ENCODE measurements at regions of chr3 and their contacts with region 1.

Region 1: GRCh38 chr3:109731620-109732473 is 394.5 kb upstream of the DPPA4 start:
- DNase-seq: no peak
- H3K4me3 ChIP-seq: no peak overlapping the region
- H3K27ac ChIP-seq: no peak overlapping the region
- H3K4me1 ChIP-seq: no peaks in the 10 kb centered on the region
- H3K27me3 ChIP-seq: no peaks in the 10 kb centered on the region
- CTCF ChIP-seq: peak; percentile 49 to 82 (median 79)
- POLR2A ChIP-seq: no peak

Region 2: GRCh38 chr3:109607897-109608296 is 124.0 kb before region 1 on chr3:
- intact Hi-C with region 1: no loop called
- DNase-seq: no peak
- H3K4me3 ChIP-seq: no peak overlapping the region
- H3K27ac ChIP-seq: no peak overlapping the region
- H3K4me1 ChIP-seq: no peaks in the 10 kb centered on the region
- H3K27me3 ChIP-seq: no peaks in the 10 kb centered on the region
- CTCF ChIP-seq: no peak
- POLR2A ChIP-seq: no peak

Region 3: DNA sequence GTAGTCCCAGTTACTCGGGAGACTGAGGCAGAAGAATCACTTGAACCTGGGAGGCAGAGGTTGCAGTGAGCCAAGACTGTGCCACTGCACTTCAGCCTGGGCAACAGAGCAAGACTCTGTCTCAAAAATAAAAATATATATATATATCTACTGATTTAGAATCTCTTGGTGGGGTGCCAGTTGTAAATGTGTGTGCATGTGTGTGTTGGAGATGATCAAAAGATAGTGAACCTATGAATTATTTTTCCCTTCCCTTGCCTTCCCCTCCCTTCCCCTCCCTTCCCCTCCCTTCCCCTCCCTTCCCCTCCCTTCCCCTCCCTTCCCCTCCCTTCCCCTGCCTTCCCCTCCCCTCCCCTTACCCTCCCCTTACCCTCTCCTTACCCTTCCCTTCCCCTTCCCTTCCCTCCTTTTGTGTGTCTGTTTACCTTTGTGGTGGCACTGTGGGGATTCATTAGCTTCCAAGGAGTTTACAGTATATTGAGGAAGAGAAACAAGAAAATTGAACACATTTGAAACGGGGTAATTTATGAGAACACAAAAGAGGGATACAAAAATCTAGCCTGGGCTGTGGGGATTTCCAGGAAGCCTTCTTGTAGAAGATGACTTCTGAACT is 113.0 kb before region 1 on chr3:
- intact Hi-C with region 1: no loop called
- DNase-seq: no peak
- H3K4me3 ChIP-seq: no peak overlapping the region
- H3K27ac ChIP-seq: no peak overlapping the region
- H3K4me1 ChIP-seq: no peaks in the 10 kb centered on the region
- H3K27me3 ChIP-seq: no peaks in the 10 kb centered on the region
- CTCF ChIP-seq: no peak
- POLR2A ChIP-seq: no peak

Region 4: DNA sequence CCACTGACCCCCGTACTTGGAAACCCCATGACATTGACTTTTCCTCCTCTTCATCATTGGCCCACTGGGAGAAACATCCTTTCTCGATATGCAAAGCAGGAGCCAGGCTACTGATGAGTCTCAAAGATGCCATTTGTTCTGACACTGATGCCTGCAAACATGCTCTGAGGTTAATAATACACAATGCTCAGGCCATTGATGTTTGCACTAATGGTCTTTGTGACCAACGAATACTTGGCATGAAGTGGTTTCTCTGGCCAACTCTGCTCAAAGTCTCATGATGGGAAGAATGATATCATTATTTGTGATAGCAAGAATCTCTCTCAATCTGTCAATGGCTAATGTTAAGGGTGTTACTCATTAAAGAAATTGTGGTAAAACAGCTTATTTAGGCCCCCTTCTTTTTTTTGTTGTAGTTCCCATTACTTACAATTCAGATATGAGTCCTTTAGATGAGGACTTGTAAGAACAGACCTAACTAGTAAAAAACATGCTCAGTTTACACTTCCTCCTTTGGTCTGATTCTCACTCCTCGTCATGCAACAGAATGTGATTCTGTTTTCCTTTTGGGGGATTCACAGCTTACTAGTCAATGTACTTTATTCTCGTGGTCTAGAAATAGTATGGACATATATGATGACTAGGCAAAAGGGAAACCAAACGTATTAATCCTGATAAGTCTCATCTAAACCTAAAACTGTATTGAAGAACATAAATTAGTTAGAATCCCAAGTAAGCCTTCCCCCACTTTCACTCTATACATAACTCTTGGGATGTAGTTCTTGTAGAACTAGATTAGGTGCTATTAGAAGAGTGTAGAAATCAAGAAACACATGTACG is 94.3 kb after region 1 on chr3:
- intact Hi-C with region 1: no loop called
- DNase-seq: no peak
- H3K4me3 ChIP-seq: no peak overlapping the region
- H3K27ac ChIP-seq: no peak overlapping the region
- H3K4me1 ChIP-seq: no peaks in the 10 kb centered on the region
- H3K27me3 ChIP-seq: no peaks in the 10 kb centered on the region
- CTCF ChIP-seq: no peak
- POLR2A ChIP-seq: no peak

Region 5: DNA sequence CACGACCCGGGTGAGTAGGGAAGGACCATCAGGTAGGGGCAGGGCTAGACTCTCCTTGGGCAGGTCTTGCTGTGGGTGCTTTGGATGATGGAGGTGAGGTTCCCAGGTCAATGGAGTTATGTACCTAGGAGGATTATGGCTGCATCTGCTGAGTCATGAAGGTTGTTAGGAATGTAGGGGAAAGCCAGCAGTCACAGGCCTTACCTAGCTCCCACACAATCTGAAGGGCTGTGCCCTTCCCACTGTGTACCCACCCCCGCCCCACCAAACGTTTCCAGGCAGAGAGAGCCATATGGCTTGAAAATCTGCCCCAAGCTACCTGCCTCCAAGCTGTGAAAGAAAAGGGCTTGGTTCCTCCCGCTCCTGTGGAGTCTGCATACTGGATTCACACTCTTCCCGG is 178.9 kb after region 1 on chr3:
- intact Hi-C with region 1: no loop called
- DNase-seq: no peak
- H3K4me3 ChIP-seq: no peak overlapping the region
- H3K27ac ChIP-seq: no peak overlapping the region
- H3K4me1 ChIP-seq: no peaks in the 10 kb centered on the region
- H3K27me3 ChIP-seq: no peaks in the 10 kb centered on the region
- CTCF ChIP-seq: no peak
- POLR2A ChIP-seq: no peak

Region 6: GRCh38 chr3:110314512-110315114 is 582.8 kb after region 1 on chr3:
- intact Hi-C with region 1: loop called (anchors 10 kb)
- DNase-seq: no peak
- H3K4me3 ChIP-seq: no peak overlapping the region
- H3K27ac ChIP-seq: no peak overlapping the region
- H3K4me1 ChIP-seq: no peaks in the 10 kb centered on the region
- H3K27me3 ChIP-seq: no peaks in the 10 kb centered on the region
- CTCF ChIP-seq: peak; percentile 49 to 63 (median 60)
- POLR2A ChIP-seq: no peak

Measured in esophagus squamous epithelium (tissue), 5 donors.